HCT116 (cell line): ENCODE measurements at regions of chr11 and their contacts with region 1.

Region 1: GRCh38 chr11:117946842-117947526 is 17.8 kb upstream of the TMPRSS13 start:
- DNase-seq: peak; percentile 85
- ATAC-seq: peak; percentile 100
- H3K4me3 ChIP-seq: no peak overlapping the region
- H3K27ac ChIP-seq: no peak overlapping the region
- H3K4me1 ChIP-seq: peaks cover 3 to 17% of the 10 kb centered on the region in 2 experiments; a peak in 3 of 4 replicates
- H3K27me3 ChIP-seq: no peaks in the 10 kb centered on the region
- CTCF ChIP-seq: peak; percentile 94 to 98 (median 95)
- POLR2A ChIP-seq: no peak
- RAD21 ChIP-seq: peak; percentile 99

Region 2: DNA sequence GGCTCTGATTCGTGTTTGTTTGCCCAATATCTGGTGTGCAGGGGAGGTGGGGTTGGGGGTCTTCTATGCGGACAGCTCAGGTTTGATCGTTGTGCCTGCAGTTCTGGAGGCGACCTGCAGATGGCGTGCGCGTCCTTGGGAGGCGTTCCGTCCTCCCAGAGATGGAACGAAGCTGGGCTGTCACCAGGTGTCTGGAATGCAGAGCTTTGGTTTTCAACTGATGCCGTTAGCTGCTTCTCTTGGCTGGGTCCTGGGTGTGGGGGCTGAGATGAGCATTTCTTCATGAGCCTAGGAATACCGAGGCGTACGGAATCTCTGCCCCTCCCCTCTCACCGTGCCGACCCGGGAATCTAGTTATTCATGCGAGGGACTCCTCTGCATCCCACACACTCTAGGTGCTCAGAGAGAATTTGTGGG is 520.7 kb before region 1 on chr11:
- CTCF ChIA-PET with region 1: interaction called, 15 read pairs
- POLR2A ChIA-PET with region 1: interaction called, 3 read pairs
- RAD21 ChIA-PET with region 1: interaction called in 1 of 2 experiments, 3 read pairs
- intact Hi-C with region 1: loop called (anchors 10 kb)
- DNase-seq: peak; percentile 21
- ATAC-seq: peak; percentile 92
- H3K4me3 ChIP-seq: no peak overlapping the region
- H3K27ac ChIP-seq: no peak overlapping the region
- H3K4me1 ChIP-seq: no peaks in the 10 kb centered on the region
- H3K27me3 ChIP-seq: no peaks in the 10 kb centered on the region
- CTCF ChIP-seq: peak; percentile 79 to 98 (median 98)
- POLR2A ChIP-seq: no peak
- RAD21 ChIP-seq: peak; percentile 87

Region 3: DNA sequence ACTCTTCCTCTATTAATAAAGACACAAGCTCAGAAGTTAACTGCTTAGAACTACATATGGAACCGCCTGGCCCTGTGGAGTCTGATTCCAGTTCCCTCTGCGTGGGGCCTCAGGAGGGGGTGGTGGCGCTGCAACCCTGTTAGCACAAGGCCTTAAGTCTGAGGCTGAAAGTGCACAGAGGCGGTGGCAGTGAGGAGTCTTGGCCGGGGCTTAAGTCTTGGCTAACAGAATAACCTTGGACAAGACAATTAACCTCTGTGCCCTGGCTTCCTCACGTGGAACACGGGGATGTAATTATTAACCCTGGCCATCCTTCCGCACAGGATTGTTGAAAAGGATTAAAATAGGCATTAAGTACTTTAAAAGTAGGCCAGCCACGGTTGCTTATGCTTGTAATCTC is 427.8 kb before region 1 on chr11:
- CTCF ChIA-PET with region 1: no interaction called
- POLR2A ChIA-PET with region 1: no interaction called
- RAD21 ChIA-PET with region 1: no interaction called
- intact Hi-C with region 1: no loop called
- DNase-seq: no peak
- ATAC-seq: no peak
- H3K4me3 ChIP-seq: no peak overlapping the region
- H3K27ac ChIP-seq: no peak overlapping the region
- H3K4me1 ChIP-seq: no peaks in the 10 kb centered on the region
- H3K27me3 ChIP-seq: no peaks in the 10 kb centered on the region
- CTCF ChIP-seq: no peak
- POLR2A ChIP-seq: no peak
- RAD21 ChIP-seq: no peak

Region 4: GRCh38 chr11:117807482-117808327 is 139.3 kb before region 1 on chr11:
- CTCF ChIA-PET with region 1: interaction called, 37 read pairs
- POLR2A ChIA-PET with region 1: interaction called, 4 read pairs
- RAD21 ChIA-PET with region 1: interaction called, 3 to 5 read pairs
- intact Hi-C with region 1: no loop called
- DNase-seq: peak; percentile 38
- ATAC-seq: peak; percentile 63
- H3K4me3 ChIP-seq: no peak overlapping the region
- H3K27ac ChIP-seq: no peak overlapping the region
- H3K4me1 ChIP-seq: peaks cover 6 to 13% of the 10 kb centered on the region in 2 experiments; a peak in 3 of 4 replicates
- H3K27me3 ChIP-seq: no peaks in the 10 kb centered on the region
- CTCF ChIP-seq: peak; percentile 79 to 93 (median 93)
- POLR2A ChIP-seq: no peak
- RAD21 ChIP-seq: peak; percentile 88

Region 5: GRCh38 chr11:117817368-117818040 is 129.5 kb before region 1 on chr11:
- CTCF ChIA-PET with region 1: interaction called, 224 read pairs
- POLR2A ChIA-PET with region 1: interaction called, 10 read pairs
- RAD21 ChIA-PET with region 1: interaction called, 6 to 9 read pairs
- intact Hi-C with region 1: loop called (anchors 1 kb)
- DNase-seq: peak; percentile 63
- ATAC-seq: peak; percentile 72
- H3K4me3 ChIP-seq: no peak overlapping the region
- H3K27ac ChIP-seq: no peak overlapping the region; the same call in 1 of the 2 replicates
- H3K4me1 ChIP-seq: peaks cover 15 to 63% of the 10 kb centered on the region in 2 experiments
- H3K27me3 ChIP-seq: no peaks in the 10 kb centered on the region
- CTCF ChIP-seq: peak in 2 of 3 experiments; percentile 99; a peak in 4 of 6 replicates
- POLR2A ChIP-seq: no peak
- RAD21 ChIP-seq: no peak

Region 6: DNA sequence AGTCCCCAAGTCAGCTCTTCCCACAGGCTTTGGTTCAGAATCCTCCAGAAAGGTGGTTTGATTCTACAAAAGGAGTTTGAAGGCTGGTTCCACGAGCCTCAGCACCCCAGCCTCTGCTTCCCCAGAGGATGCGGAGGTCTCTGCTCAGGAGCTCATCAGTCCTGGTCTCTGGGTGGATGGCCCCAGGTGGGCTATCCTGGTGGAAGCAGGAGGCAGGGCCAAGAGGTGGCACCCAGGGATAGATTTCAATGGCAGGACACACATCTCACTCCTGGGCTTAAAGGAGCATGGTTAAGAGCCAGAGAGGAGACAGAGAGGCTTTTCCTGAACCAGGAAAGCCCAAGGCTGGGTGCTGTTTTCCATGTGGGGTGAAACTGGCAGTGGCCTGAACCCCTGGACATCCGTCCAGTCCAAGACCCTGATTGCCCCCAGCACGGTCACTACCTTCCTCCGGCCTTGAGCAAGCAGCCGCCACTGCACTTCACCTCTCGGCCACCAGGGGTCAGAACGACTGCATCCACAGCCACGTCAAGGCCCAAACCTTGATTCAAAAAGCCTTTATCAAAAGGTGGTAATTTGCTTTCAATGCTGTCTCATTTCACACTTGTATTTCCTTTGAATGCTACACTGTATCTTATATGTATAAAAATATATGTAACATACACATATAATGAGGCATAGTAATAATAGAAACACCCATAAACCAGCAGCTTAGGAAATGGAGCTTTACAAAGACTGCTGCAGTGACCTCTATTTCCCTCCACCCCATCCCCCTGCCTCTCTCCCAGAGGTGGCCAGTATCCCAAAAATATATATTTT is 103.1 kb before region 1 on chr11:
- CTCF ChIA-PET with region 1: interaction called, 143 read pairs
- POLR2A ChIA-PET with region 1: interaction called, 3 read pairs
- RAD21 ChIA-PET with region 1: interaction called, 20 to 24 read pairs
- intact Hi-C with region 1: loop called (anchors 1 kb)
- DNase-seq: peak; percentile 54
- ATAC-seq: peak; percentile 95
- H3K4me3 ChIP-seq: no peak overlapping the region
- H3K27ac ChIP-seq: no peak overlapping the region
- H3K4me1 ChIP-seq: no peaks in the 10 kb centered on the region
- H3K27me3 ChIP-seq: no peaks in the 10 kb centered on the region
- CTCF ChIP-seq: peak; percentile 94 to 99 (median 95)
- POLR2A ChIP-seq: no peak
- RAD21 ChIP-seq: peak; percentile 94

Region 7: GRCh38 chr11:117907251-117907981 is 39.6 kb before region 1 on chr11:
- CTCF ChIA-PET with region 1: interaction called, 10 read pairs
- POLR2A ChIA-PET with region 1: interaction called, 3 read pairs
- RAD21 ChIA-PET with region 1: interaction called, 4 to 8 read pairs
- intact Hi-C with region 1: no loop called
- DNase-seq: peak; percentile 94
- ATAC-seq: peak; percentile 97
- H3K4me3 ChIP-seq: peak overlapping the region; percentile 52 to 66
- H3K27ac ChIP-seq: peak overlapping the region; percentile 42
- H3K4me1 ChIP-seq: peaks cover 9 to 32% of the 10 kb centered on the region in 2 experiments
- H3K27me3 ChIP-seq: no peaks in the 10 kb centered on the region
- CTCF ChIP-seq: no peak
- POLR2A ChIP-seq: peak; percentile 91
- RAD21 ChIP-seq: no peak

Region 8: GRCh38 chr11:118051611-118052461 is 104.9 kb after region 1 on chr11:
- CTCF ChIA-PET with region 1: interaction called, 44 read pairs
- POLR2A ChIA-PET with region 1: no interaction called
- RAD21 ChIA-PET with region 1: interaction called, 5 to 11 read pairs
- intact Hi-C with region 1: loop called (anchors 1 kb)
- DNase-seq: no peak
- ATAC-seq: no peak
- H3K4me3 ChIP-seq: no peak overlapping the region
- H3K27ac ChIP-seq: no peak overlapping the region
- H3K4me1 ChIP-seq: peaks cover 0 to 6% of the 10 kb centered on the region in 2 experiments; a peak in 2 of 4 replicates
- H3K27me3 ChIP-seq: no peaks in the 10 kb centered on the region; the same call in 1 of the 2 replicates
- CTCF ChIP-seq: no peak
- POLR2A ChIP-seq: no peak
- RAD21 ChIP-seq: no peak